ENCODE measurements at regions of chr12 and their contacts with region 1.

Region 1: GRCh38 chr12:108939594-108939993 is 59.7 kb downstream of the DAO start:
- DNase-seq: no peak
- ATAC-seq: no peak
- H3K4me3 ChIP-seq: no peak overlapping the region
- H3K27ac ChIP-seq: no peak overlapping the region
- H3K4me1 ChIP-seq: no peaks in the 10 kb centered on the region
- H3K27me3 ChIP-seq: no peaks in the 10 kb centered on the region

Region 2: DNA sequence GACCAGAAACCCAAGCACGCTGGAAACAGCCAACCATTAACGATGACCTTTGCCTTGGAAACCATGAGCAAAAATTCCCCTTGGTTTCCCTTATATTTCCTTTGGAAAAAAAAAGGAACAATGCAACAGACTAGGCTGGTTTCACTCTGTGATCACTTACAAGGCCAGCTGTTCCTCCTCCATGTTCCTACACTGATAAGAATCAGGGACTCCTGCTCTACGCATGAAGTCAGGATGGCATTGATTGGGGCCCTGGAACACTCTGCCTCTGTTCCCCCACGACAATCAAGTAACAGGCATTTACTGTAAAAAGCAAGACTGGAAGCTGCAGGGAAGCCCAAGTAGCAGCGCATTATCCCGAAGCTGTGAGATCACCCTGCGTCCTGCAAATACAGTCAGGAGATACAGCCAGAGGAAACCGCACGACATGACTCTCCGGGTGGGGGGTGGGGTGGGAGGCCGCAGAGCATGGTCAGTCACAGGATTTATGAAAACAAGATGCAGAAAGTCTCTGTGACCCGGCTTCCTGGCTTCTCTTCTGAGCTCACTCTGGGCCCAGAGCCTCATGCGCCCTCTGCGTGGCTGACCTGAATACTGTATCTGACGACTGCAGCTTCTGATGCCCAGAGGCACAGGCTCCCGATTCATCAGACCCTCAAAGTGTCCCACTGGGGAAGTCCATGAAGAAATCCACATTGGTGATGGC is 113.3 kb before region 1 on chr12:
- intact Hi-C with region 1: no loop called
- DNase-seq: peak; percentile 84 to 87
- ATAC-seq: peak; percentile 79
- H3K4me3 ChIP-seq: no peak overlapping the region
- H3K27ac ChIP-seq: peak overlapping the region; percentile 87 to 92
- H3K4me1 ChIP-seq: peaks cover 6 to 7% of the 10 kb centered on the region in 2 donors
- H3K27me3 ChIP-seq: no peaks in the 10 kb centered on the region

Region 3: DNA sequence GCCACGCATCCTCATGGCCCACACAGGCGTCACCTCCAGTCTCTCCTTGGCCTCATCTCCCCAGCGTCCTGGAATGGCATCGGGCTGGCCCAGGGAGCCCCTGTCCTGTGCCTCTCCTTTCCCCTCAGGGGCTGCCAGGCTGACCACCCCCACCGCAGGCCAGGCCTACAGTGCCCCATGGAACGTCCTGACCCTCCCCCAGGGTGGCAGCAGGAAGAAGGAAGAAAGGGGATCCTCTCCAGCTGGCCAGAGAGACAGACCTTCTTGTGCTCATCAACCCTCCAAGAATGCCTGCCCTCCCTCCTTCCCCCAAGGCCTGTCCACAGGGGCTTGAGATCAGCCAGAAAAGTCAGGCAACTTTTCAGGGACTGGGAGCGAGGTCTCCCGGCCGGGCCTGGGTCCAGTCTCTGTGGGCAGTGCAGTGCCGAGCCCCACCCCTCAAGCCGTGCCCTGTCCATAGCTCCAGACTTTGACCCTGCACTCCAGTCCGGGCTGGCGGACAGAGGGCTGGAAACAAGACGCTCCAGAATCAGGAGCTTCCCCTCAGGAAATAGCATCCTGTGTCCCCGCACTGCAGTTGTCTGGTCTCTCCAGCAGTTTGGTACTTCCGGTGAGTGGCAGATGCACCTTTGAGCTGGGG is 59.9 kb before region 1 on chr12 and contains the start of gene DAO:
- intact Hi-C with region 1: loop called in 1 of 2 experiments (anchors 10 kb)
- DNase-seq: no peak
- ATAC-seq: peak; percentile 50
- H3K4me3 ChIP-seq: no peak within 1 kb of the TSS
- H3K27ac ChIP-seq: no peak within 1 kb of the TSS
- H3K4me1 ChIP-seq: no peaks in the 10 kb centered on the region
- H3K27me3 ChIP-seq: no peaks in the 10 kb centered on the region
- total RNA-seq, gene DAO: not detected

Measured in aorta (tissue), 5 donors.